Dorsolateral prefrontal cortex (tissue), 120 donors: ENCODE measurements at regions of chr1 and their contacts with region 1.

Region 1: DNA sequence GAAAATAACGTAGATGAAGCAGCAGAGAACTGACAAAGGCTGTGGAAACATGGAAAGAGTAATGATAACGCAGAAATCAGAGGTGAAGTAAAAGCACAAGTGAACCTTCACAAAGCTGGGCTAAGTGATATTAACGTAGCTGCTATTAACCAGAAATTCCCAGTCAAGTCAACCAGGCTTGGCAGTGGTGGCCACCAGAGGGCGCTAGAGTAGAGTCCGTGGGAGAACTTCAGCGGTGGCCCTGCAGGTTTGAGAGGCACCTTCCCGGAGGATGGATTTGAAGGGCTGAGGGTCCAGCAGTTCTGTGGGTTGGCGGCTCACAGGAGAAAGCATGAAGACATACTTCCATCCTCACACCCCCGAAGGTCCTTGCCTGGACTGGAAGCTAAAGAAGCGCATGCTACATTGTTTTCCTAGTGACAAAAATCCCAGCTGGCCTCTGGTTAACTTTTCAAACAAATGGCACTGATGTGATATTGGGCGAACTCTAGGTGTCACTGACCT is 81.7 kb upstream of the ZNF648 start:
- DNase-seq: peak; percentile 86 to 96 (median 92)
- H3K4me3 ChIP-seq: peak overlapping the region in 2 of 59 donors; percentile 17 to 19
- H3K27ac ChIP-seq: peak overlapping the region; percentile 82 to 98 (median 94)
- H3K27me3 ChIP-seq: no peaks in the 10 kb centered on the region
- CTCF ChIP-seq: peak; percentile 92 to 99 (median 97)

Region 2: DNA sequence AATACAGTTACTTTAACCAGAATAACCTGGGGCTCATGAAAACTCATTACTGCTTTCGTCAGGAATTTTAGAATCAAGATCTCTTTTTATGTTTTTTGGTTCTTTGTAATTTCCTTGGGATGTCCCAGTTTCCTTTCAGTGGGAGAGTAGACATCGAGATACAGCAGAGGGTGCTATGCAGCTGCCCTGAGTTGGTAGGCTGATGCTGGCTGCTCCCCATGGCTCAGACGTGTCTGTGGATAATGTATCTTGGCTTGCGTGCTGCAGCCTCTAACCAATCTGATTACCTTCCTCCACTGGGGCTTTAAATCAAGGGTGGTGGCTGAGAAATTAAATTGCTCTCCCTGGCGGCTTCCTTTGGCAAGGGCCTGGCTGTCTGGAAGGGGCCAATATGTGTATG is 406.1 kb before region 1 on chr1:
- intact Hi-C with region 1: no loop called
- DNase-seq: no peak
- H3K4me3 ChIP-seq: no peak overlapping the region
- H3K27ac ChIP-seq: no peak overlapping the region
- H3K27me3 ChIP-seq: no peaks in the 10 kb centered on the region
- CTCF ChIP-seq: peak in 18 of 56 donors; percentile 11 to 43 (median 25)

Region 3: DNA sequence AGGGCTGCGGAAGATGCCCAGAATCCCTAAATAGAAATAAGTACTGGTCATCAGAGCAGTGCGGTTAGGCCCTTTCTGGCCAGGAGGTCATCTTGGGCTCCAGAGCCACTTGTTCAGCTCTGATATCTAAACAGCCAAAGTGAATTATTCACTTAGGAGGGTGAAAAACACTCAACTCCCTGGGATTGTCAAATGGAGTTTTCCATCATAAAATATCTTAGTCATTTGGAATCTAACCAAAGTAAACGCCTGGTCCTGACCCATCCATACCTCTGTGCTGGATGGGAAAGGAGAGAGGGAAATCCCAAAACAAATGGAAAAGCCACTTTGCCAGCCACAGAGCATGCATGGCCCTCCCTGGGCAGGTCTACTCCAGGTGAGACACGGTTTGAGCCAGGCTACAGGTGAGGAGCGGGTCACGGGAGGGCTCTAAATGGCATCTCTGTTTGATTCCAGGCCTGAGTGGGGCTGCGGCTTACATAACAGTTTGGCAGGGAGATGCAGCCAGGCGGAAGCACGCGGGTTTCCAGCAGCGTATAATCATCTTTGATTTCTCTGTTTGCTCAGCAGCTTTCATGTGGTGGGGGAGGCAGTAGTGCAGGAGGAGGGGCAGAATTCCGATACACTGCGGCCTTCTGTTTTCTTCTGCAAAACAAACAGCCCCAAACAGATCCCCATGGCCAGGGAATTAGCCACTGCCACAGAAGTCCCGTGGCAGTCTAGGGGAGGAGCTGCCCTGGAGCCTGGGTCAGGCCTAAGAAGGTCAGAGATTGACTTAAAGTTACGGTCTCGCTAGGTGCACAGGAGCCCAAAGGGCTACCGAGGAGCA is 22.6 kb before region 1 on chr1:
- intact Hi-C with region 1: loop called in 1 of 2 experiments (anchors 2 kb)
- DNase-seq: peak; percentile 48 to 81 (median 77)
- H3K4me3 ChIP-seq: peak overlapping the region in 6 of 59 donors; percentile 0 to 36 (median 16)
- H3K27ac ChIP-seq: peak overlapping the region; percentile 59 to 95 (median 83)
- H3K27me3 ChIP-seq: no peaks in the 10 kb centered on the region
- CTCF ChIP-seq: peak in 9 of 56 donors; percentile 8 to 37 (median 13)

Region 4: GRCh38 chr1:182301467-182302198 is 158.4 kb after region 1 on chr1:
- intact Hi-C with region 1: loop called in 1 of 2 experiments (anchors 2 kb)
- DNase-seq: peak in 6 of 10 donors; percentile 27 to 67 (median 52)
- H3K4me3 ChIP-seq: peak overlapping the region in 1 of 59 donors; percentile 1
- H3K27ac ChIP-seq: peak overlapping the region; percentile 22 to 94 (median 86)
- H3K27me3 ChIP-seq: no peaks in the 10 kb centered on the region
- CTCF ChIP-seq: peak in 51 of 56 donors; percentile 25 to 72 (median 47)

Region 5: GRCh38 chr1:182391362-182392044 is 248.3 kb after region 1 on chr1 and contains the start of gene GLUL:
- intact Hi-C with region 1: loop called (anchors 1 kb)
- DNase-seq: peak; percentile 79 to 96 (median 93)
- H3K4me3 ChIP-seq: peak within 1 kb of the TSS; percentile 67 to 99 (median 92)
- H3K27ac ChIP-seq: peak within 1 kb of the TSS; percentile 92 to 100 (median 98)
- H3K27me3 ChIP-seq: peaks cover 0 to 4% (median 0%) of the 10 kb centered on the region in 45 donors
- CTCF ChIP-seq: peak in 16 of 56 donors; percentile 3 to 44 (median 14)
- total RNA-seq, gene GLUL: 1,265 to 6,769 (median 2,230) TPM

Region 6: DNA sequence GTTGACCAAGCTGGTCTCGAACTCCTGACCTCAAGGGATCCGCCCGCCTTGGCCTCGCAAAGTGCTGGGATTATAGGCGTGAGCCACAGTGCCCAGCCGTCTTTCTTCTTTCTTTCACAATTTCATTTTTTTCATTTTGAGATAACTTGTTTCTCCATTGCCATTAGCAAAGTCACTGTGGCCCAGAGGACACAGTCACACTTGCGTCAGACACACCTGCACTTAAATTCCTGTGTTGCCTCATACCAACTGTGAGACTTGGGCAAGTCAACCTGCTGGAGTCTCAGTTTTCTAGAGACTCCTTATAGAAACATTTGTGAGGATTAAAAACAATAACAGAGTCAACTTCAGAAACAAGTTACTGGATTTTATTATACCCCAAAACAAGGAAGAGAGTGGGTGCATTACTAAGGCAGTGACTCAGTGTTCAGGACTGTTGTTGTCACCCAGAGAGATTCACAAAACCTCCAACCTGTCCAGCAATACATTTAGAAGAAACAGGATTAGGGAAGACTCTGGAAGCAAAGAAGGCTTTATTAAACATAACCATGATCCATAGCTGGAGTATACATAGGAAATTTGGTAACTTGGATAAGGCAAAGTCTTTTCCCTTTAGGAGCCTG is 254.7 kb after region 1 on chr1:
- intact Hi-C with region 1: loop called (anchors 1 kb)
- DNase-seq: no peak
- H3K4me3 ChIP-seq: no peak overlapping the region
- H3K27ac ChIP-seq: peak overlapping the region in 12 of 59 donors; percentile 9 to 99 (median 80)
- H3K27me3 ChIP-seq: no peaks in the 10 kb centered on the region
- CTCF ChIP-seq: no peak